ENCODE measurements at regions of chr16 and their contacts with region 1.

Region 1: GRCh38 chr16:68328151-68328859 is 17.5 kb downstream of the PRMT7 start:
- DNase-seq: peak; percentile 81 to 92
- H3K4me3 ChIP-seq: no peak overlapping the region
- CTCF ChIP-seq: peak in 1 of 3 donors; percentile 88
- POLR2A ChIP-seq: no peak

Region 2: GRCh38 chr16:68244903-68245853 is 83.1 kb before region 1 on chr16 and contains the start of gene PLA2G15:
- intact Hi-C with region 1: loop called (anchors 5 kb)
- DNase-seq: peak; percentile 94 to 99
- H3K4me3 ChIP-seq: peak within 1 kb of the TSS; percentile 85
- CTCF ChIP-seq: no peak
- POLR2A ChIP-seq: peak in 1 of 2 donors; percentile 2
- total RNA-seq, gene PLA2G15: 16.4 to 28.6 (median 22.3) TPM

Region 3: DNA sequence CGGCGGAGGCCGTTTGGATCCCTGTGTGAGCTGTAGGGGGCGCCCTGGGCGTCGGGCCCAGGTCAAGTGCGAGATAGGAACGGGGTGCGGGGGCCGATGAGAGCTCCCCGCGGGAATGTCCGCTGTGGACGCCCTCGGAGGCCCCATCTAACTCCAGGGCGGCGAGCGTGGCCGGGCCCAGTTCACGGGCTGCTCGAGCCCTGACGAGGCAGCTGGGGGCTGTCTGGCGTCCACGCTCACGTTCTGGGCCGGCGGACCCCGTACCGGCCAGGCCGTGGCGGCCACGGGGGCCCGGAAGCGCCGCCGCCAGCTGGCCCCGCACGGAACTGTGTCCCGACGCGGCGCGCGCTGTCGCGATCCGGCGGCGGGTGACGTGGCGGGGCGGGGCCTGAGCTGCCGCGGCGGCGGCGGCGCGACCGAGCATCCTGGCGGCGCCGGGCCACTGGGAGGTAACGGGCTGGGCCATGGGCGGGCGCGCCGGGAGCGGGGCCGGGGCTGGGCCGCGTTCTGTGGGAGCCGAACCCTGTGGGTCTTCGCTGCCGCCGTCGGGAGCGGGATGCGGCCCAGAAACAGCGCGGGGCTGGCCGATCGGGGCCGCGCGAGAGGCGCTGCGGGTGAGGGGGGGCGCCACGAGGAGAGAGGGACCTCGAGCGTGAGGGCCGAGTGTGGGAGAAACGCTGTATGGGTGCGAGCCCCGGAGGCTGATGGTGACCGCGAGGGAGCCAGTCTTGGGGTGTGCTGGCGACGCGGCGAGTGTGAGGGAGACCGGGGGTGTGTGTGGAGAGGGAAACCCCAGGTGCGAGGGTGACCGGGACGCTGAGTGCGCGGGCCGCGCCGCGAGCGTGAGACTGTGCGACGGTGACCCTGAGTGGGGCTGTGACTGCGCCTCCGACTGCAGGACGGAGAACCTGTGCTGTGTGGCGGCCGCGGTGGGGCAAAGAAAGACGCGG is 63.9 kb before region 1 on chr16 and contains the start of gene SLC7A6:
- intact Hi-C with region 1: loop called (anchors 5 kb)
- DNase-seq: peak in 1 of 2 donors; percentile 94
- H3K4me3 ChIP-seq: peak within 1 kb of the TSS; percentile 80
- CTCF ChIP-seq: peak in 1 of 3 donors; percentile 64
- POLR2A ChIP-seq: no peak
- total RNA-seq, gene SLC7A6: 23.4 to 55.6 (median 37.4) TPM